ENCODE measurements at regions of chr4 and their contacts with region 1.

Region 1: GRCh38 chr4:110617646-110618580 is 5.0 kb downstream of the PITX2 start:
- DNase-seq: no peak
- ATAC-seq: no peak
- H3K4me3 ChIP-seq: no peak overlapping the region
- H3K4me3 Mint-ChIP-seq: peak overlapping the region; percentile 21
- H3K27ac ChIP-seq: no peak overlapping the region
- H3K27ac Mint-ChIP-seq: no peak overlapping the region
- H3K4me1 ChIP-seq: peaks cover 39% of the 10 kb centered on the region
- H3K4me1 Mint-ChIP-seq: peaks cover 32% of the 10 kb centered on the region
- H3K27me3 ChIP-seq: peaks cover 84 to 94% of the 10 kb centered on the region in 2 experiments
- H3K27me3 Mint-ChIP-seq: peaks cover 96% of the 10 kb centered on the region
- CTCF ChIP-seq: no peak

Region 2: GRCh38 chr4:110075083-110075738 is 542.7 kb before region 1 on chr4:
- CTCF ChIA-PET with region 1: no interaction called
- POLR2A ChIA-PET with region 1: no interaction called
- intact Hi-C with region 1: no loop called
- DNase-seq: no peak
- ATAC-seq: no peak
- H3K4me3 ChIP-seq: no peak overlapping the region
- H3K4me3 Mint-ChIP-seq: no peak overlapping the region
- H3K27ac ChIP-seq: no peak overlapping the region
- H3K27ac Mint-ChIP-seq: no peak overlapping the region
- H3K4me1 ChIP-seq: no peaks in the 10 kb centered on the region
- H3K4me1 Mint-ChIP-seq: no peaks in the 10 kb centered on the region
- H3K27me3 ChIP-seq: no peaks in the 10 kb centered on the region
- H3K27me3 Mint-ChIP-seq: no peaks in the 10 kb centered on the region
- CTCF ChIP-seq: no peak

Region 3: GRCh38 chr4:110639207-110640090 is 21.5 kb after region 1 on chr4:
- CTCF ChIA-PET with region 1: no interaction called
- POLR2A ChIA-PET with region 1: no interaction called
- intact Hi-C with region 1: loop called in 1 of 2 experiments (anchors 1 kb)
- DNase-seq: no peak
- ATAC-seq: no peak
- H3K4me3 ChIP-seq: no peak overlapping the region
- H3K4me3 Mint-ChIP-seq: no peak overlapping the region
- H3K27ac ChIP-seq: no peak overlapping the region
- H3K27ac Mint-ChIP-seq: no peak overlapping the region
- H3K4me1 ChIP-seq: no peaks in the 10 kb centered on the region
- H3K4me1 Mint-ChIP-seq: peaks cover 5% of the 10 kb centered on the region
- H3K27me3 ChIP-seq: peaks cover 80 to 94% of the 10 kb centered on the region in 2 experiments
- H3K27me3 Mint-ChIP-seq: peaks cover 89% of the 10 kb centered on the region
- CTCF ChIP-seq: no peak

Region 4: GRCh38 chr4:110681381-110681780 is 63.5 kb after region 1 on chr4:
- CTCF ChIA-PET with region 1: no interaction called
- POLR2A ChIA-PET with region 1: no interaction called
- intact Hi-C with region 1: no loop called
- DNase-seq: no peak
- ATAC-seq: no peak
- H3K4me3 ChIP-seq: no peak overlapping the region
- H3K4me3 Mint-ChIP-seq: no peak overlapping the region
- H3K27ac ChIP-seq: no peak overlapping the region
- H3K27ac Mint-ChIP-seq: no peak overlapping the region
- H3K4me1 ChIP-seq: no peaks in the 10 kb centered on the region
- H3K4me1 Mint-ChIP-seq: no peaks in the 10 kb centered on the region
- H3K27me3 ChIP-seq: no peaks in the 10 kb centered on the region
- H3K27me3 Mint-ChIP-seq: peaks cover 22% of the 10 kb centered on the region
- CTCF ChIP-seq: no peak